Tibial artery (tissue), 4 donors: ENCODE measurements at regions of chr13 and their contacts with region 1.

Region 1: DNA sequence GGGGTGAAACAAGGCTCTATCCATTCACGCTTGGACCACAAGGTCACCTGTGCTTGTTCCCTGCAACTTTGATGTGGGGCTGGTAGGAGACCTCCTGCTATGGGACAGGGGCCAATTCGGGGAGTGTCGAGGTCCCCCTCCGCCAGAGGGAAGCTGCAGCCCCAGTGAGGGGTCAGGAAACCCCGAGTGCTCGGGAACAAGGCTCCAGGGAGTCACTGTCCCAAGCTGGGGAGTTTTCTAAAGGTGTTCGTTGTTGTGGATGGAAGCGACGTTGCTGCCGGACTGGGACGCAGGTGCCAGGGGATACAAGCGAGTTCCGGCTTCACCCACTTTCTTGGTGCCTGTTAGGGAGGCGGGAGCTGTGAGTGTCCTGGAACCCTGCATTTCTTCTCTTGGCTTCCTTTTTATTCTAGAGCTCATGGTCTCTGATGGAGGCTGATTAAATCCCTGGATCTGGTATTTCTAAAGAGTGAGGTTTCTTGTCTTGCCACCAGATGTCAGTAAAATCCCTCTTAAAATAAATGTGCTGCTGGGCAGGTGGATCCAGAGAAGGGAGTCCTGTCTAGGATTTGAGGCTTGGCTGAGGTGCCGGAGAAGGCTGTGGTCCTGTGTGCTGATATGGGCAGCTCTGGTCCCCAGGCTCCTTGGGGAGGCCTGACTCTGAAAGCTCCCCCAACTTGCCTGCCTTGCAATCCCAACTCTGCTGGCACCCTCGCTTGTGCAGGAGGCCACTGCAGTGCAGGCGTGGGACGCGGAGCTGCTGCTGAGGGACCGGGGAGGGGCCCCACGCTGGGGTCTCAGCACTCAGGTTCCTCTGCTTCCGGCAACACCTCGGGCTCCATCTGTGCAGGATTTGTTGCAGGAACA is 153.9 kb downstream of the TEX29 start:
- DNase-seq: no peak
- H3K4me3 ChIP-seq: no peak overlapping the region
- H3K27ac ChIP-seq: no peak overlapping the region
- H3K4me1 ChIP-seq: no peaks in the 10 kb centered on the region
- H3K27me3 ChIP-seq: peaks cover 0 to 29% of the 10 kb centered on the region in 2 donors
- CTCF ChIP-seq: peak; percentile 46 to 51

Region 2: DNA sequence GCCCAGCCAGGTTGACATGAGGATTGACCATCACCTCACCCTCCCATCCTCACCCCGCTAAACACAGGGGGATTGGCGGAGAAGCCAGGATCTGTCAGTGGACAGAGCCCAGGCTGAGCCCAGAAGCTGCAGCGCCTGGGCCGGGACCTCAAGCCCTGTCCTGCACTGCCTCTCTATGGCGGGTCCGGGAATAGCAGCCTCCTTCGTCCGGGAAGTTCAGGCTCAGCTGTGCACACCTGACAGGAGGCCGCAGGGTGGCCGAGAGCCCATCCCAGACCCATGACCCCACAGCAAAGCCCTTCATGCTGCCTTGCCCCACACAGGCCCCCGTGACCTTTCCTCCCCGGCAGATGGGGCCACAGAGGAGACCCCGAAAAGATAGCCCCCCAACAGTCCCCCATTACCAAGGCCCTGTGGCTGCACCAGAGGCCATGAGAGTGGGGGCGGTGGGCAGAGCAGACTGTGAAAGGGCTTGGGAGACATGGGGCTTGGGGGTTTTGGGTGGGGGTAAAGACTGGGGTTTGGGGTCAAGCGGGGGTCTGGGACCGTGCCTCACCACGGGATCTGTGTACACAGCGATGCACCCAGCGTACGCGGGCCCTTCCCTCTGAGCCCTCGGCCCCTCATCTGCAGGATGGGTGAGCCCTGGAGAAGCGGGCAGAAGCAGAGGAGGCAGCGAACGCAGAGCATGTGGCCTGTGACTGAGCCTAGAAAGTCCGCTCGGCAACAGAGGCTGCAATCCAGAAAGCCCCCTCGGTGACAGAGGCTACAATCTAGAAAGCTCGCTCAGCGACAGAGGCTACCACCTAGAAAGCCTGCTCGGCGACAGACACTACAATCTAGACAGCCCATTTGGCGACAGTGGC is 969.9 kb after region 1 on chr13:
- intact Hi-C with region 1: loop called (anchors 5 kb)
- DNase-seq: peak; percentile 20 to 62
- H3K4me3 ChIP-seq: no peak overlapping the region
- H3K27ac ChIP-seq: no peak overlapping the region
- H3K4me1 ChIP-seq: no peaks in the 10 kb centered on the region
- H3K27me3 ChIP-seq: peaks cover 0 to 50% of the 10 kb centered on the region in 2 donors
- CTCF ChIP-seq: peak; percentile 58 to 73

Region 3: GRCh38 chr13:112616586-112617362 is 1142.4 kb after region 1 on chr13:
- intact Hi-C with region 1: loop called (anchors 10 kb)
- DNase-seq: no peak
- H3K4me3 ChIP-seq: no peak overlapping the region
- H3K27ac ChIP-seq: no peak overlapping the region
- H3K4me1 ChIP-seq: no peaks in the 10 kb centered on the region
- H3K27me3 ChIP-seq: peaks cover 0 to 8% of the 10 kb centered on the region in 2 donors
- CTCF ChIP-seq: peak; percentile 34 to 37